ENCODE measurements at regions of chr3 and their contacts with region 1.

Region 1: DNA sequence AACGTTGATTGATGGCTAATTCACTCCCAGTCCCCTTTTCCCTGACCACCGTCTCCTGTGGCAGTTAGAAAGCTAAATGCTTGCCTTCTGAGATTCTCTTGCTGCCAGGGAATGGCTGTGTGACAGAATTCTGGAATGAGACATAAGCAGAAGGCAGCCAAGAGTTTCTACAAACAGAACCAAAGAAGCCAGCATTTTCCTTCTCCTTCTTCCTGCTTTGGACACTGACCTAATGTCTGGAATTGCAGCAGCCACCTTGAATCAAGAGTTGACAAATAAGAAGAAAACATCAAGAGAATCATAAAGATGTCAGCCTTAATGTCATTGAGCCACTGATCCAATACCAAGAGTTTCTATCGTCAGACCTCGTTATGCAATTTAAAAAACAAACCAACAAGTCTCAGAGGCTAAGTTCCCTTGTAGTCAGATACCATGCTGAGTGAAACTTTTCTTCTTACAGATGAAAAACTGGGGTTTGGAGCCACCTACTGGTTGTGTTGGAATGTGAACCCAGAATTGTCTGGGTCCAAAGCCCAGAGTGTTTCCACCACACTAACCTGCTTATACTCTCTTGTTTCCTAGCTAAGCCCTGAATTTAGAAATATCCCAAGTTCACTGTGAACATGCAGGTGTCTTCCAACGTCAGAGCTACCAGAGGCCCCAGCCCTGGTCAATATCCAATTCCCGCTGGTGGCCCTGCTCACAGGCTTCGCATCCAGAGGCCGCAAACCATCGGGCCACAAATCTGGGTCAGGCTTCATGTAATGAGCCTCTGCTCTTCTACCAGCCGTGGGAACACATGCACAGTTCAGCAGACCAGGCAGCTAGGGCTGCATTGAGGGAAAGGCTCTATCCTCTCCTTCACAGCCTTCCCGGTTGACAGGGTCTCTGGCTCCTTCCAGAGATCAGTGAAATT is 42.5 kb downstream of the MCF2L2 start:
- DNase-seq: no peak
- ATAC-seq: peak; percentile 85
- H3K4me3 ChIP-seq: no peak overlapping the region
- H3K27ac ChIP-seq: no peak overlapping the region
- H3K4me1 ChIP-seq: peaks cover 7% of the 10 kb centered on the region; the same call in 1 of the 2 replicates
- H3K27me3 ChIP-seq: no peaks in the 10 kb centered on the region
- CTCF ChIP-seq: peak; percentile 63 to 87 (median 81); a peak in 5 of 6 replicates
- EP300 ChIP-seq: no peak
- POLR2A ChIP-seq: no peak
- RAD21 ChIP-seq: peak; percentile 84

Region 2: DNA sequence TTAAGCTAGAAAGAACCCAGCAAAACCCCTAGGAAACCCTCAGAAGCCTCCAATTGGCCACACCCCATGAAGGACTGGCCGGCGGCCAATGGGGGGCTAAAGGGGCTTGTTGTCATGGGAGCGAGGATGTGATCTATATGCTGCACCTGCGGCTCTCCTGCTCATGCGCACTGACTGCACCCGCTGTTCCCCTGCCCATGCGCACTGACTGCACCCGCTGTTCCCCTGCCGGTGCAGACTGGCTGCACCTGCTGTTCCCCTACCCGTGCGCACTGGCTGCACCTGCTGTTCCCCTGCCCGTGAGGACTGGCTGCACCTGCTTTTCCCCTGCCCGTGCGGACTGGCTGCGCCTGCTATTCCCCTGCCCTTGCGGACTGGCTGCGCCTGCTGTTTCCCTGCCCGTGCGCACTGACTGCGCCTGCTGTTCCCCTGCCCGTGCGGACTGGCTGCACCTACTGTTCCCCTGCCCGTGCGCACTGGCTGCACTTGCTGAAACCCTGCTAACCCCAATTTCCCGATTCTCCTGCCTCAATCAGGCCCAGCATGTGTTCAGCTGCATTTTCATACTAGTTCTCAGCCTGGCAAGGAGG is 269.8 kb before region 1 on chr3:
- CTCF ChIA-PET with region 1: interaction called, 229 read pairs
- POLR2A ChIA-PET with region 1: no interaction called
- RAD21 ChIA-PET with region 1: interaction called, 136 read pairs
- SMC1A ChIA-PET with region 1: interaction called, 187 read pairs
- in situ Hi-C with region 1: loop called (anchors 5 kb)
- intact Hi-C with region 1: no loop called
- DNase-seq: no peak
- ATAC-seq: peak; percentile 96
- H3K4me3 ChIP-seq: peak overlapping the region; percentile 45
- H3K27ac ChIP-seq: no peak overlapping the region
- H3K4me1 ChIP-seq: peaks cover 3% of the 10 kb centered on the region; the same call in 1 of the 2 replicates
- H3K27me3 ChIP-seq: no peaks in the 10 kb centered on the region
- CTCF ChIP-seq: no peak
- EP300 ChIP-seq: no peak
- POLR2A ChIP-seq: peak; percentile 50; the same call in 1 of the 2 replicates
- RAD21 ChIP-seq: no peak

Region 3: DNA sequence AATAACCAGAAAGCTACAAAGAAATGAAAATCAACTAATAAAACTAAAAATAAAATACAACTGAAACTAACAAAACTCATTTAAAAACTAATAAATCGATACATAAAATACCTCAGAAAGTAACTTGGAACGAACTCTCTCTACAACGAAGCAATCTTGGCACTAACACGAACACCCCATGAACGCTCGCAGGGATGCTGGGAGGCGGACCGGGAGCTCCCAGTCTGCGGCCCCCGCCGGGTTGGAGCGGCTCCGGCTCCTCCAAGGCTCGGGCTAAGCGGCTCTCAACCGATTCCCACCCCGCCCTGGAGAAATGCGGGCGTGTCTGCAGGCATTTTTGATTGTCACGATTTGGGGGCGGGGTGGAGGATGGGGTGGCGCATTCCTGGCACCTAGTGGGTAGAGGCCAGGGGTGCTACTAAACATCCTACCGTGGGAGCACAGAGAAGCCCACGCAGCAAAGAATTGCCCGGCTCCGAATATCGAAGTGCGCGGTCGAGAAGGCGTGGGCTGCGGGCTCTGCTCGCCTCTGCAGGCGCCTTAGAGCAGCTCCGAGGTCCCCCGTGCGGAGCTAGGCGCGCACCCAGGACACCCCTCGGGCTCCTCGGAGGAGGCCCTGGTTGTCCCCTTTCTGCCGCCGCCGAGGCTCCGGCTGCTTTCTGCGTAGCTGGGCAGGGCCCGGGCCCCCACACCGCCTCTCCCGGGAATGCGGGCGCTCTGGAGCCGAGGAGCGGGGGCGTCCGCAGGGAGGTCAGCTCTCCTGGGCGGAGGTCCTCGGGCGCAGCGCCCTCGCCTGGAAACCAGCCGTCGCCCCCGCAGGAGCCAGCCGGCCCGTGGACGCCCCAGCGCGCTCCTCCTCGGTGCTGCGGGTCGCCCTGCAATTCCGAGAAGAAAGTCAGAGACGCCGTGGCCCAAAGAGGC is 207.1 kb before region 1 on chr3:
- CTCF ChIA-PET with region 1: interaction called, 400 read pairs
- POLR2A ChIA-PET with region 1: interaction called, 23 read pairs
- RAD21 ChIA-PET with region 1: interaction called, 256 read pairs
- SMC1A ChIA-PET with region 1: interaction called, 265 read pairs
- in situ Hi-C with region 1: loop called (anchors 5 kb)
- intact Hi-C with region 1: loop called (anchors 1 kb)
- DNase-seq: no peak
- ATAC-seq: peak; percentile 87
- H3K4me3 ChIP-seq: peak overlapping the region; percentile 45
- H3K27ac ChIP-seq: no peak overlapping the region
- H3K4me1 ChIP-seq: peaks cover 6% of the 10 kb centered on the region; the same call in 1 of the 2 replicates
- H3K27me3 ChIP-seq: peaks cover 4 to 16% of the 10 kb centered on the region in 2 experiments
- CTCF ChIP-seq: peak; percentile 5 to 56 (median 27); a peak in 3 of 6 replicates
- EP300 ChIP-seq: no peak
- POLR2A ChIP-seq: no peak
- RAD21 ChIP-seq: peak; percentile 41; the same call in 1 of the 2 replicates

Region 4: DNA sequence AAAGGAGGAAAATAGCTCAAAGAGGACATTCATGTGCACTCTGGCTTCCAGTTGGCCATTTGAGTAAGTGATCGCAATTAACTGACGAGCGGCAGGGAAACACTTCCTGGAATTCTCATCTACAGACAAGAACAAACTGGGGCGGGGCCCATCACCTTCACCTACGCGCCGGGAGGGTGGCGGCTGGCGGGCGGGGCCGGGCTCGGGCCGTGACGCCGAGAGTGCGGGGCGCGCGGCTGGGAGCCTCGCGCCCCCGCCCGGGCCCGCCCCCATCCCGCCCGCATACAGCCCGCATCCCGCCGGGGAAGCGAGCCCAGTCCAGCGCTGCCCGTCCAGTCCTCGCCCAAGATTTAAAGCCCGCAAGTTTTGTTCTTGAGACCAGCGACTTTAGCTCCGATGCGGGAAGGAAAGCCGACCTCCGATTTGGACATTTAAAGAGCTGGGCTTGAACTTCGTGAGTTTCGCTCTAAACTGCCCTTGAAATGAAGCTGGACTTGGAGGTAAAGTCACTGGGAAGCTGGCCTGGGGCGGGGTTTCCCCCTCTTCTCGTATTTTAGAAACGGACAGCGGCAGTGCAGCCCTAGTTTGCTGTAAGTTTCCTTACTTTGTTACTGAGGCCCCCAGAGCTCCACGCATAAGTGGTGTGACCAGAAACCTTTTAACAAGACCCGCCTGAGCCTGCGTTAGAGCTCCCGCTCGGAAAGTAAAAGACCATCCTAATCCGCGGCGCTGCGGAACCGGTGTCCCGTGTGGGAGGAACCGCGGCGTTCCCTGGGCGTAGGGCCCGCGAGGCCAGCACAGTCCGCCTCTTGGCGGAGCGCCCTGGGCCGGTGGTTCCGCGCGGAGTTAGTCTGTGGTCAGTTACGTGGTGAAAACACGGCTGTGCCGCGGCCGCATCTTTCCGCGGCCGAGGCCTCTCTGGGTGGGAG is 132.7 kb before region 1 on chr3 and contains the start of gene B3GNT5:
- CTCF ChIA-PET with region 1: interaction called, 21 read pairs
- POLR2A ChIA-PET with region 1: no interaction called
- RAD21 ChIA-PET with region 1: interaction called, 9 read pairs
- SMC1A ChIA-PET with region 1: interaction called, 4 read pairs
- in situ Hi-C with region 1: no loop called
- intact Hi-C with region 1: no loop called
- DNase-seq: no peak
- ATAC-seq: peak; percentile 33
- H3K4me3 ChIP-seq: peak within 1 kb of the TSS; percentile 53
- H3K27ac ChIP-seq: no peak within 1 kb of the TSS
- H3K4me1 ChIP-seq: no peaks in the 10 kb centered on the region
- H3K27me3 ChIP-seq: peaks cover 9 to 21% of the 10 kb centered on the region in 2 experiments
- CTCF ChIP-seq: no peak
- EP300 ChIP-seq: no peak
- POLR2A ChIP-seq: no peak
- RAD21 ChIP-seq: no peak
- polyA plus RNA-seq, gene B3GNT5: 0.29 to 0.50 TPM

Region 5: DNA sequence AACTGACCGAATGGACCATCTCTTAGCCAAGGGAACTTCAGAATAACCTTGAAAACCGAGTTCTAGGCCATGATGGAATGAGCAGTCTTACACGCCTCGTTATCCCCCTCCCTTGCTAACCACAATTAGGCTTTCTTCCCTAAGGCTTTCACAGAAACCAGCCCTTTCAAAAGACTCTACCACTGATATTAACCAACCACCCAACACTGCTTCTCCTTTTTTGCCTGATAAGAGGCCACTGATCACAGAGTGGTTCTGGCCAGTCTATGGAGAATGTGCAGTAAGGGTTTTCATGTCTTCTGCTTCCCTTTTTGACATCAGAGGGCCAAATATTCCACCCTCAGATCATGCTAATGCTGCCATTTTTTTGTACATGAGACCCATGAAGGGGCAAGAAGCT is 16.8 kb before region 1 on chr3:
- CTCF ChIA-PET with region 1: interaction called, 19 read pairs
- POLR2A ChIA-PET with region 1: no interaction called
- RAD21 ChIA-PET with region 1: interaction called, 18 read pairs
- SMC1A ChIA-PET with region 1: interaction called, 7 read pairs
- in situ Hi-C with region 1: no loop called
- intact Hi-C with region 1: no loop called
- DNase-seq: no peak
- ATAC-seq: peak; percentile 13; the same call in 1 of the 3 replicates
- H3K4me3 ChIP-seq: no peak overlapping the region
- H3K27ac ChIP-seq: no peak overlapping the region
- H3K4me1 ChIP-seq: peaks cover 9% of the 10 kb centered on the region
- H3K27me3 ChIP-seq: no peaks in the 10 kb centered on the region
- CTCF ChIP-seq: no peak
- EP300 ChIP-seq: no peak
- POLR2A ChIP-seq: no peak
- RAD21 ChIP-seq: no peak

Measured in GM12878 (cell line).